ENCODE measurements at regions of chr18 and their contacts with region 1.

Region 1: DNA sequence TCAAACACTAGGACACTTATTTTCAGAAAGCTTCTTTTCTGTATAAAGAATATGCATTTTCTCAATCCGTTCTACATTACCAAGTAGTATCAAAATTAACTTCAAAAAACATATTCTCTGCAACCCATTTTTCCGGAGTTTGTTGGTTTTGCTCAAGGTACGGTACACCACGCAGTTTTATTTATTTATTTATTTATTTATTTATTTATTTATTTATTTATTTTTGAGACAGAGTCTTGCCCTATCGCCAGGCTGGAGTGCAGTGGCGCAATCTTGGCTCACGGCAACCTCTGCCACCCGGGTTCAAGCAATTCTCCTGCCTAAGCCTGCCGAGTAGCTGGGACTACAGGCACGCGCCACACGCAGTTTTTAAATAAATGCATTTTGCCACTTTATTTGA is 900.3 kb downstream of the CBLN2 start:
- DNase-seq: no peak
- ATAC-seq: no peak
- H3K4me3 ChIP-seq: no peak overlapping the region
- H3K4me3 Mint-ChIP-seq: no peak overlapping the region
- H3K27ac ChIP-seq: no peak overlapping the region
- H3K27ac Mint-ChIP-seq: no peak overlapping the region
- H3K4me1 ChIP-seq: no peaks in the 10 kb centered on the region
- H3K4me1 Mint-ChIP-seq: no peaks in the 10 kb centered on the region
- H3K27me3 ChIP-seq: no peaks in the 10 kb centered on the region
- H3K27me3 Mint-ChIP-seq: no peaks in the 10 kb centered on the region
- CTCF ChIP-seq: no peak

Region 2: DNA sequence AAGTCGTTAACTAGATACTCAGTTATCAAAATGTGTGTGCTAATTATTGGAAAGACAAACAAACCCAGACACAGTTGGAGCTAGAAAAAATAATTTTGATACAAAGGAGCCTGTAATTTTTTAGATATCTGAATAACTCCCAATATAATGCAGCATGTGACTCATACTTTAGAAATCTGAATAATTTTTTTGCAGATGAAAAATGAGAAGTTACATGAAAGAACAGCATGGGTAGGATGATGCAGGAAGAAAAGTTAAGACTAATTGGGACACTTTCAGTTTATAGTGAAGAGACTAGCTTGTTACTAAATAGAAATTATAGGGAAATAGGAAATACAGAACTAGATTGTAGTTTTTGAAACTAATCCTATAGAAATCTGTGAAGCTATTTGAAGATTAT is 45.4 kb before region 1 on chr18:
- CTCF ChIA-PET with region 1: no interaction called
- POLR2A ChIA-PET with region 1: no interaction called
- intact Hi-C with region 1: no loop called
- DNase-seq: no peak
- ATAC-seq: no peak
- H3K4me3 ChIP-seq: no peak overlapping the region
- H3K4me3 Mint-ChIP-seq: no peak overlapping the region
- H3K27ac ChIP-seq: no peak overlapping the region
- H3K27ac Mint-ChIP-seq: no peak overlapping the region
- H3K4me1 ChIP-seq: no peaks in the 10 kb centered on the region
- H3K4me1 Mint-ChIP-seq: no peaks in the 10 kb centered on the region
- H3K27me3 ChIP-seq: no peaks in the 10 kb centered on the region
- H3K27me3 Mint-ChIP-seq: no peaks in the 10 kb centered on the region
- CTCF ChIP-seq: peak; percentile 2

Region 3: GRCh38 chr18:71673498-71673897 is 29.7 kb after region 1 on chr18:
- CTCF ChIA-PET with region 1: no interaction called
- POLR2A ChIA-PET with region 1: no interaction called
- intact Hi-C with region 1: no loop called
- DNase-seq: no peak
- ATAC-seq: no peak
- H3K4me3 ChIP-seq: no peak overlapping the region
- H3K4me3 Mint-ChIP-seq: no peak overlapping the region
- H3K27ac ChIP-seq: no peak overlapping the region
- H3K27ac Mint-ChIP-seq: no peak overlapping the region
- H3K4me1 ChIP-seq: no peaks in the 10 kb centered on the region
- H3K4me1 Mint-ChIP-seq: no peaks in the 10 kb centered on the region
- H3K27me3 ChIP-seq: no peaks in the 10 kb centered on the region
- H3K27me3 Mint-ChIP-seq: no peaks in the 10 kb centered on the region
- CTCF ChIP-seq: no peak

Region 4: DNA sequence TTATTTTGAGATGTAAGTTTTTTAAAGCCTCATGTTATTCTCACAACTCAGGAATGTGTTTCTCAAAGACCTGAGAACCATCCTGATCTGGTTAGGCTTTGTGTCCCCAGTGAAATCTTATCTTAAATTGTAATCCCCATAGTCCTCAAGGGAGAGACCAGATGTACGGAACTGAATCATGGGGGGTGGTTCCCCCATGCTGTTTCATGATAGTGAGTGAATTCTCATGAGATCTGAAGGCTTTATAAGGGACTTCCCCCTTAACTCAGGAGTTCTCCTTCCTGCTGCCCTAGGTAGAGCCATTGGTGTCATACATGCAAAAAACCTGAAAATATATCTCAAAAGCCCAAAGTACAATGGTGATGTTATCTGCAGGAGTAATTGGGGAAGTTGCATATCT is 63.6 kb after region 1 on chr18:
- CTCF ChIA-PET with region 1: no interaction called
- POLR2A ChIA-PET with region 1: no interaction called
- intact Hi-C with region 1: loop called in 1 of 2 experiments (anchors 10 kb)
- DNase-seq: no peak
- ATAC-seq: no peak
- H3K4me3 ChIP-seq: no peak overlapping the region
- H3K4me3 Mint-ChIP-seq: no peak overlapping the region
- H3K27ac ChIP-seq: no peak overlapping the region
- H3K27ac Mint-ChIP-seq: no peak overlapping the region
- H3K4me1 ChIP-seq: no peaks in the 10 kb centered on the region
- H3K4me1 Mint-ChIP-seq: no peaks in the 10 kb centered on the region
- H3K27me3 ChIP-seq: no peaks in the 10 kb centered on the region
- H3K27me3 Mint-ChIP-seq: no peaks in the 10 kb centered on the region
- CTCF ChIP-seq: no peak

Region 5: GRCh38 chr18:71844814-71845213 is 201.0 kb after region 1 on chr18:
- CTCF ChIA-PET with region 1: no interaction called
- POLR2A ChIA-PET with region 1: no interaction called
- intact Hi-C with region 1: no loop called
- DNase-seq: no peak
- ATAC-seq: no peak
- H3K4me3 ChIP-seq: no peak overlapping the region
- H3K4me3 Mint-ChIP-seq: no peak overlapping the region
- H3K27ac ChIP-seq: no peak overlapping the region
- H3K27ac Mint-ChIP-seq: no peak overlapping the region
- H3K4me1 ChIP-seq: no peaks in the 10 kb centered on the region
- H3K4me1 Mint-ChIP-seq: no peaks in the 10 kb centered on the region
- H3K27me3 ChIP-seq: no peaks in the 10 kb centered on the region
- H3K27me3 Mint-ChIP-seq: no peaks in the 10 kb centered on the region
- CTCF ChIP-seq: no peak